ENCODE measurements at regions of chr3 and their contacts with region 1.

Region 1: GRCh38 chr3:42247576-42248027 is 18.4 kb downstream of the CCK start:
- DNase-seq: peak; percentile 60
- ATAC-seq: peak; percentile 88
- H3K4me3 ChIP-seq: no peak overlapping the region
- H3K27ac ChIP-seq: no peak overlapping the region
- H3K4me1 ChIP-seq: peaks cover 0 to 5% of the 10 kb centered on the region in 2 experiments; a peak in 1 of 4 replicates
- H3K27me3 ChIP-seq: peaks cover 8% of the 10 kb centered on the region; the same call in 1 of the 2 replicates
- CTCF ChIP-seq: peak; percentile 63 to 93 (median 88)
- POLR2A ChIP-seq: no peak
- RAD21 ChIP-seq: peak; percentile 95

Region 2: DNA sequence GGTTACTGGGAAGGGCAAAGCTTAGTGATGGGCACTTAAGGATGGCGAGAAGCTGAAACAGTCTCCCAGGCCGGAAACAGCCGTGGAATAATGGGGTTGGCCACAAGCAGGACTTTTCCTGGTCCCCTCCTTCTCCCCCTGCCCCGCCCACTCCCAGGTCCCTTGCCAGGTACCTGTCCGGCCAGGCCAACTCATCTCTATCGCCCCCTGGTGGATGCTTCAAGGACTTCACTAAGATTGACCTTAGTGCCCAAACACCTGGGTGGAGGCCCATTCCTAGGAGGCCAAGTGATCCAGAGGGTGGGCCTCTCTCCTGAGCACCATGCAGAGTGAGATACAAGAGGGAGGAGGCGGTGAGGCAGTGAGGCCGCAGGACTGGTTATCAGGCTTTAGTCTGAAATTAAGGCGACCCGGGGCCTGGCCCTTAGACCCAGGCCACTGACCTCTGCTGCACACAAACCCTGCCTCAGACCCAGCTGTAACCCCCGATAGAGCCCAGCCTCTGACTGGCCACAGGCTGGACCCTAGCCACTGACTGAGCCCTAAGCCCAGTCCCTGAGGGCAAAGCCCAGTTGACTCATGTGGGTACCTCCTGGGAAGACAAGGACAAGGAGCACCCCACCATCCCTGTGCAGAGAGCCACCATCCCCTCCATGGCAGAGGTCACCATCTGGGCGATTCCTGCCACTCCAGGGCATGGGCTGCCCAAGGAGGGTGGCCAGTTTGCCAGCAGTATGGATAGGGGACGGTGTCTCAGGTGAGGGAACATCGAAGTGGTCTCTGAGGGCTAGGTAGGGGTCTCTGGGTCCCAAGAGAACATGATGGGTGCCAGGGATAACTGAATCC is 292.5 kb after region 1 on chr3:
- CTCF ChIA-PET with region 1: interaction called, 10 read pairs
- POLR2A ChIA-PET with region 1: no interaction called
- RAD21 ChIA-PET with region 1: no interaction called
- intact Hi-C with region 1: loop called (anchors 1 kb)
- DNase-seq: peak; percentile 55
- ATAC-seq: peak; percentile 91
- H3K4me3 ChIP-seq: no peak overlapping the region
- H3K27ac ChIP-seq: no peak overlapping the region
- H3K4me1 ChIP-seq: peaks cover 0 to 9% of the 10 kb centered on the region in 2 experiments; a peak in 1 of 4 replicates
- H3K27me3 ChIP-seq: no peaks in the 10 kb centered on the region
- CTCF ChIP-seq: peak; percentile 68 to 92 (median 81); a peak in 5 of 6 replicates
- POLR2A ChIP-seq: no peak
- RAD21 ChIP-seq: peak; percentile 69